ENCODE measurements at regions of chr6 and their contacts with region 1.

Region 1: GRCh38 chr6:142946181-142946923 is 1.4 kb upstream of the HIVEP2 start:
- DNase-seq: peak; percentile 92 to 99 (median 95)
- H3K4me3 ChIP-seq: peak overlapping the region; percentile 51 to 92
- H3K4me3 Mint-ChIP-seq: peak overlapping the region; percentile 92 to 100 (median 94)
- H3K27ac ChIP-seq: peak overlapping the region; percentile 99
- H3K27ac Mint-ChIP-seq: peak overlapping the region; percentile 99 to 100 (median 99)
- H3K4me1 ChIP-seq: peaks cover 33% of the 10 kb centered on the region
- H3K4me1 Mint-ChIP-seq: peaks cover 23 to 57% (median 32%) of the 10 kb centered on the region in 4 donors
- H3K27me3 ChIP-seq: no peaks in the 10 kb centered on the region
- H3K27me3 Mint-ChIP-seq: peaks cover 0 to 7% of the 10 kb centered on the region in 2 donors

Region 2: DNA sequence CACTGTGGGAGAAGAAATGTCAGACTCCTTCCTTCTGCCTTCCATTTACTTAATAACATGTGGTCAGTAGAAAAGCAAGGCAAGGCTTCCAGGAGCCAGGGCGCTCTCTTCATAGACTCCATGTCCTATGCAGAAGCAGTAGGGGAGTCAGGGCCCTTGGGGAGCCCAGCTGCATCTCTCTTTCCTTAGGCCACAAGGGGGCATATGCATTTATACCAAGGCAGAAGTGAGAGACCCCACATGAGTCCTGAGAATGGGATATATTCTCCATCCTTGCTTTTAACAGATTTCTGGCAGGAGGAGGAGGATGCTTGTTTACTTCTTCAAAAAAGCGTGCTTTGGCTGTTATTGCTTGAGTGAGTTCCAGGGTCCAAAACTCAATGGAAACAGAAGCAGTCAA is 199.8 kb before region 1 on chr6:
- CTCF ChIA-PET with region 1: interaction called, 26 read pairs
- POLR2A ChIA-PET with region 1: interaction called, 16 read pairs
- intact Hi-C with region 1: no loop called
- DNase-seq: peak in 4 of 5 donors; percentile 29 to 42 (median 34)
- H3K4me3 ChIP-seq: no peak overlapping the region
- H3K4me3 Mint-ChIP-seq: no peak overlapping the region
- H3K27ac ChIP-seq: no peak overlapping the region
- H3K27ac Mint-ChIP-seq: peak overlapping the region in 1 of 7 donors; percentile 16
- H3K4me1 ChIP-seq: peaks cover 5% of the 10 kb centered on the region
- H3K4me1 Mint-ChIP-seq: peaks cover 3 to 11% (median 9%) of the 10 kb centered on the region in 4 donors
- H3K27me3 ChIP-seq: no peaks in the 10 kb centered on the region
- H3K27me3 Mint-ChIP-seq: no peaks in the 10 kb centered on the region

Region 3: DNA sequence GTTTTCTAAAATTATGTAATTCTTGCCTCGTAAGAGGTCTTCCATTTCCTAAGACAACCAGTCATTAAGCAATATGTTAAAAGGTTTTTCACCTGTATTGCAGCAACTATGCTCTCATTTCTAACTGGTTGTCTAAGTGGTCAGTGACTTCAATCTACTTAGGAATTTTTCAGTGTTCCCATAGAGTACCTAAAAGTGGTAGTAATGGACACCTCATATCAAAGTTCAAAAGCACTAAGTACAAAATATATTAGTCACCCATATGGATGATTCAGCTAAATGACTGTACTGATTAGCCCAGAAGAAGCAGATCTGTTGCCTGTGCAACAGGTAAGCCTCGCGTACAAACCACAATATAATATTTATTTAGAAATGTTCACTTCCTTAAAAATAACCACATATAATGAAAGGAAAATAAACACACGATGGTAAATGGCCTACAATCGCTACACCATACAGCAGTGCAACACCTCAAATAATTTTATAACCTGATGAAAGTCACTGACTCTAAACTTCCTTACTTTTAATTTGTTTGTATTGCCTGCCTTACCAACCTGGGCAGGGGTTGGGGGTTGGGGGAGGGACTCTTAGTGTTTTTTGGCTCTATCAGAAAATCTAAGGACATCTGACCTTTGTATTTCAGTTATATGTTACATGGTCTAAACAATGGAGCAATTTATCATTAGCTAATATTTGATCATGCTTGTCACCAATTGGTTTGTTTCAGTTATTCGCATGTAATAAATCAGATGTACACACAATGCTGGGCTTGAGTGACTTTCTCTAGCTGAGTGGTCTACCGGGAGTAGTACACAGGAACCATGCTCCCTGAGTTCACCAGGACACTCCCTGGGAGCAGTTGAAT is 107.3 kb before region 1 on chr6:
- CTCF ChIA-PET with region 1: interaction called, 6 read pairs
- POLR2A ChIA-PET with region 1: interaction called, 45 read pairs
- intact Hi-C with region 1: loop called (anchors 1 kb)
- DNase-seq: no peak
- H3K4me3 ChIP-seq: no peak overlapping the region
- H3K4me3 Mint-ChIP-seq: peak overlapping the region; percentile 69 to 90 (median 76)
- H3K27ac ChIP-seq: peak overlapping the region; percentile 25
- H3K27ac Mint-ChIP-seq: peak overlapping the region; percentile 77 to 94 (median 88)
- H3K4me1 ChIP-seq: peaks cover 84% of the 10 kb centered on the region
- H3K4me1 Mint-ChIP-seq: peaks cover 59 to 85% (median 72%) of the 10 kb centered on the region in 4 donors
- H3K27me3 ChIP-seq: no peaks in the 10 kb centered on the region
- H3K27me3 Mint-ChIP-seq: no peaks in the 10 kb centered on the region

Region 4: GRCh38 chr6:142857233-142857761 is 89.1 kb before region 1 on chr6:
- CTCF ChIA-PET with region 1: no interaction called
- POLR2A ChIA-PET with region 1: interaction called, 145 read pairs
- intact Hi-C with region 1: loop called (anchors 1 kb)
- DNase-seq: peak; percentile 55 to 66 (median 61)
- H3K4me3 ChIP-seq: peak overlapping the region; percentile 32 to 51
- H3K4me3 Mint-ChIP-seq: peak overlapping the region; percentile 81 to 94 (median 86)
- H3K27ac ChIP-seq: peak overlapping the region; percentile 81
- H3K27ac Mint-ChIP-seq: peak overlapping the region; percentile 91 to 98 (median 95)
- H3K4me1 ChIP-seq: peaks cover 96% of the 10 kb centered on the region
- H3K4me1 Mint-ChIP-seq: peaks cover 75 to 95% (median 86%) of the 10 kb centered on the region in 4 donors
- H3K27me3 ChIP-seq: no peaks in the 10 kb centered on the region
- H3K27me3 Mint-ChIP-seq: no peaks in the 10 kb centered on the region

Region 5: DNA sequence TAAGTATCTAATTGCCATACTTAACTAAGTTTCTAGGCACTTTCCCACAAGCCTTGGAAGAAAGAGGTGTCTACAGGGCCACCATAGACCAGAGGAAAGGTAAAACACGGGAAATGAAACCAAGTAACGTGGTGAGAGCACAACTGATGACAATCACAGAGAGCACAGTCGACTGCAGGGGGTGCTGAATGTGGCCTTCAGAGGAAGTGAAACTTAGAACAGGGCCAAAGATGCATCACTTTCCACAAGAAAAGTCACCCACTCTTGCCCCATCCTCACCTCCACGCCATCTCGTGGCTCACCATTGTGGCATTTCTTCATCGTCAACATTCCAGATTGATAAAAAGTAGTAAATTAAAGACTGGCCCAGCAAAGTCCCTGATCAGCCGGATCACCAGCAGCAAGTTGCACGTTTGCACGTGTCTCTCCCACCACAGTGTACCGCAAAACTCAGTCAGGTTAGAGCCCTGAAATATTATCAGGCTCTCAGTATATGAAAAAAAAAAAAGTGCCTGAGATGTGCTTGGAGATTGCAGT is 32.8 kb before region 1 on chr6:
- CTCF ChIA-PET with region 1: interaction called, 7 read pairs
- POLR2A ChIA-PET with region 1: interaction called, 22 read pairs
- intact Hi-C with region 1: loop called (anchors 1 kb)
- DNase-seq: peak; percentile 78 to 88 (median 81)
- H3K4me3 ChIP-seq: peak overlapping the region; percentile 14 to 57
- H3K4me3 Mint-ChIP-seq: peak overlapping the region; percentile 84 to 95 (median 88)
- H3K27ac ChIP-seq: peak overlapping the region; percentile 85
- H3K27ac Mint-ChIP-seq: peak overlapping the region in 6 of 7 donors; percentile 98 to 100 (median 99)
- H3K4me1 ChIP-seq: peaks cover 97% of the 10 kb centered on the region
- H3K4me1 Mint-ChIP-seq: peaks cover 71 to 86% (median 80%) of the 10 kb centered on the region in 4 donors
- H3K27me3 ChIP-seq: no peaks in the 10 kb centered on the region
- H3K27me3 Mint-ChIP-seq: no peaks in the 10 kb centered on the region

Region 6: DNA sequence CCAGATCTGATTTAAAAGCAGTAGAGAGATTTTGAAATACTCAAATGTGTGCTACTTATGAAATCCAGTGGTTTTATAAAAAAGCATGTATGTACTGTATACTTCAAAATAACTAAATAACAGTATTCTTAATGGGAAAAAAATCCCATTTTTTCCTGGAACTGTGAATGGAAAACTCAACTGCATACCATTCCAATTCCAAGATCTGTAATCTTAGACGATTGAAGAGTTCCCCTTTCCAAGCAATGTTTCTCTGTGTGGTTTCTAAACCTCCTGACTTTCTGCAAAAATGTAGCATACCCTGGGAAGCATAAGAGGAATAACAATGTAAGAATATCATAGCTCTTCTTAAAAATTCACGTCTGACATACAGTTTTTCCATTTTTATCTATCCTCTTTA is 38.9 kb after region 1 on chr6:
- CTCF ChIA-PET with region 1: no interaction called
- POLR2A ChIA-PET with region 1: no interaction called
- intact Hi-C with region 1: no loop called
- DNase-seq: no peak
- H3K4me3 ChIP-seq: no peak overlapping the region
- H3K4me3 Mint-ChIP-seq: no peak overlapping the region
- H3K27ac ChIP-seq: no peak overlapping the region
- H3K27ac Mint-ChIP-seq: no peak overlapping the region
- H3K4me1 ChIP-seq: no peaks in the 10 kb centered on the region
- H3K4me1 Mint-ChIP-seq: no peaks in the 10 kb centered on the region
- H3K27me3 ChIP-seq: no peaks in the 10 kb centered on the region
- H3K27me3 Mint-ChIP-seq: peaks cover 0 to 5% of the 10 kb centered on the region in 2 donors

Region 7: GRCh38 chr6:143060354-143060805 is 114.0 kb after region 1 on chr6:
- CTCF ChIA-PET with region 1: no interaction called
- POLR2A ChIA-PET with region 1: interaction called, 9 read pairs
- intact Hi-C with region 1: loop called (anchors 2 kb)
- DNase-seq: peak; percentile 76 to 88 (median 78)
- H3K4me3 ChIP-seq: peak overlapping the region; percentile 39 to 72
- H3K4me3 Mint-ChIP-seq: peak overlapping the region; percentile 92 to 97 (median 96)
- H3K27ac ChIP-seq: peak overlapping the region; percentile 70
- H3K27ac Mint-ChIP-seq: peak overlapping the region; percentile 92 to 99 (median 97)
- H3K4me1 ChIP-seq: peaks cover 17% of the 10 kb centered on the region
- H3K4me1 Mint-ChIP-seq: peaks cover 18 to 28% (median 23%) of the 10 kb centered on the region in 4 donors
- H3K27me3 ChIP-seq: no peaks in the 10 kb centered on the region
- H3K27me3 Mint-ChIP-seq: peaks cover 0 to 2% of the 10 kb centered on the region in 2 donors